T-cell (primary cell): ENCODE measurements at regions of chr3 and their contacts with region 1.

Region 1: GRCh38 chr3:128804017-128804810 is 75.2 kb upstream of the ACAD9 start:
- DNase-seq: peak; percentile 15 to 87 (median 60)
- ATAC-seq: peak; percentile 90 to 95 (median 94)
- H3K4me3 ChIP-seq: peak overlapping the region; percentile 32 to 34
- H3K4me3 Mint-ChIP-seq: peak overlapping the region; percentile 71 to 75 (median 72)
- H3K27ac ChIP-seq: peak overlapping the region; percentile 86
- H3K27ac Mint-ChIP-seq: peak overlapping the region; percentile 90 to 94
- H3K4me1 ChIP-seq: peaks cover 33 to 36% of the 10 kb centered on the region in 2 experiments
- H3K4me1 Mint-ChIP-seq: peaks cover 79 to 82% (median 80%) of the 10 kb centered on the region in 3 donors
- H3K27me3 ChIP-seq: no peaks in the 10 kb centered on the region
- H3K27me3 Mint-ChIP-seq: no peaks in the 10 kb centered on the region

Region 2: DNA sequence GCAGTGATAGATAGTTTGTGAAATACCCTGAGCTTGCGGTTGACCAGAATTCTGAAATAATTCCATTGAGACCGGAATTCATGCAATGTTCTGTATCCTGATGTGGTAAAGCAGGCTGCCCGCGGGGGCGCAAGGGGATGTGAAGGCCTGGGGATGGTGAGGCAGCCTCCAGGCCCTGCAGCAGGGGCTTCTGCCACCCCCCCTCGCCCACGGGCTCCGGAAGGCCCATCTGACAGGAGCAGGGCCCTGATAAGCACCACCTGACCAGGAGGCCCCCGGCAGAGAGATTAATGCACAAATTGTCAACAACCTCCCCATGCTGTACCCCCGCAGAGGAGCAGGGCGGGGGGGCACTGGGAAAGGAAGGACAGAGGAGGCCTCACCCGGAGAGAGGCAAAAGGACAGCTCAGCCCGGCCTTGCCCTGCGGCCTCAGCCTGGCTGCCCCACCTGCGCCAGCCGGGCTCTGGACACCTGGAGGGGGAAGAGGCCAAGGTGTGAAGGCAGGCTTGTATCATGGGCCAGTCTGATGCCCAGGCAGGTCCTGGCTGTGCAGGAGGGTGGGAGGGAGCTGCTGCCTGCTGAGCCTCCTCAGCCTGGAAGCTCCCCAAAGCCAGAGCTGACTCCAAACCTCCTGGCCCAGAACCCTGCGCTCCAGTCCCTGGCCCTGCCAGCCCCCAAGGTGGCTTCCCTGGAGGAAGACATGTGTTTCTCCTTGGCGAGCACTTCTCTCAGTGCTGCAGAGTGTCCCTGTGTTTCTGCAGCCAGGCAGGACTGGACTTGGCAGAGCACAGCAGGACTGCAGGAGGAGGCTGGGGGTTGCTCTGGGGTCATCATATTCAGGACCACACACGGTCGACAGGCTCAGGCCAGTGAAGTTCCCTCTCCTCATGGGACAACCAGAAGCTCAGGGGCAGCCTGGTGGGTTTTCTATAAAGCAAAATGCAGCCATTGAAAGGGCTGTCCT is 200.1 kb before region 1 on chr3:
- CTCF ChIA-PET with region 1: no interaction called
- POLR2A ChIA-PET with region 1: no interaction called
- DNase-seq: no peak
- ATAC-seq: no peak
- H3K4me3 ChIP-seq: no peak overlapping the region
- H3K4me3 Mint-ChIP-seq: no peak overlapping the region
- H3K27ac ChIP-seq: no peak overlapping the region
- H3K27ac Mint-ChIP-seq: no peak overlapping the region
- H3K4me1 ChIP-seq: peaks cover 0 to 12% of the 10 kb centered on the region in 2 experiments
- H3K4me1 Mint-ChIP-seq: peaks cover 0 to 2% (median 0%) of the 10 kb centered on the region in 3 donors
- H3K27me3 ChIP-seq: peaks cover 0 to 12% of the 10 kb centered on the region in 2 experiments
- H3K27me3 Mint-ChIP-seq: no peaks in the 10 kb centered on the region

Region 3: DNA sequence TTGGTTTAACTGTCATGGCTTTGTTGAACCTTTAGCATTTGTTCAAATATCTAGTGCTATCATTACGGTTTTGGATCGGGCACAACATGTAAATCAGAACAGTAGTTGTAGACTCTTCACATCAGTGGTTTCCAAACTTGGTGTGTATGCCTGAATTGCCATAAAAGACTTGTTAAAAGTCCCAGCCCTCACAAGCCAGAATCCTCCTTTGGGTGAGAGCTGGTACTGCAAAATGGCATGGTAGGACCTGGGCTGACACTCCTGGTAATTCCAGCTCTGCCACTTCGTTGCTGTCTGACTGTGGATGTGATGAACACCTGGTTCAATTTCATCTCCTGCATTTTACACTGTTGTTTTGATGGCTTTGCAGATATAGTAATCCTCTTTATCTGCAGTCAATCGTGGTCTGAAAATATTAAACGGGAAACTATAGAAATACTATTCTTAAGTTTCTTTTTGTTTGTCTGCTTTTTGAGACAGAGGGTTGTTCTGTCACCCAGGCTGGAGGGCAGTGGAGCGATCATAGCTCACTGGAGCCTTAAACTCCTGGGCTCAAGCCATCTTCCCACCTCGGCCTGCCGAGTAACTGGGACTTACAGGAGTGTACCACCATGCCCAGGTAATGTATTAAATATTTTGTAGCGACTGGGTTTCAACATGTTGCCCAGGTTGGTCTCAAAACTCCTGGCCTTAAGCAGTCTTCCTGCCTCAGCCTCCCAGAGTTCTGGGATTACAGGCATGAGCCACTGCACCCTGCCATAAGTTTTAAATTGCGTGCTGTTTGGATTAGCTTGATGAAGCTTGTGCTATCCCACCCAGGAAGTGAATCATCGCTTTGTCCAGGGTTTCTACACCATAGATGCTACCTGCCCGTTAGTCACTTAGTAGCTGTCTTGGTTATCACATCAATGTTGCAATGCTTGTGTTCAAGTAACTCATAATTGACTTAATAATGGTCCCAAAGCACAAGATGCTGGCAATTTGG is 16.7 kb before region 1 on chr3:
- CTCF ChIA-PET with region 1: interaction called in 1 of 2 experiments, 12 read pairs
- POLR2A ChIA-PET with region 1: interaction called in 1 of 2 experiments, 4 read pairs
- DNase-seq: peak in 20 of 35 experiments; percentile 17 to 68 (median 27)
- ATAC-seq: peak; percentile 29 to 81 (median 64)
- H3K4me3 ChIP-seq: no peak overlapping the region
- H3K4me3 Mint-ChIP-seq: peak overlapping the region; percentile 74 to 78 (median 77)
- H3K27ac ChIP-seq: peak overlapping the region; percentile 84
- H3K27ac Mint-ChIP-seq: peak overlapping the region; percentile 98 to 99
- H3K4me1 ChIP-seq: peaks cover 47 to 67% of the 10 kb centered on the region in 2 experiments
- H3K4me1 Mint-ChIP-seq: peaks cover 83 to 95% (median 89%) of the 10 kb centered on the region in 3 donors
- H3K27me3 ChIP-seq: no peaks in the 10 kb centered on the region
- H3K27me3 Mint-ChIP-seq: no peaks in the 10 kb centered on the region

Region 4: DNA sequence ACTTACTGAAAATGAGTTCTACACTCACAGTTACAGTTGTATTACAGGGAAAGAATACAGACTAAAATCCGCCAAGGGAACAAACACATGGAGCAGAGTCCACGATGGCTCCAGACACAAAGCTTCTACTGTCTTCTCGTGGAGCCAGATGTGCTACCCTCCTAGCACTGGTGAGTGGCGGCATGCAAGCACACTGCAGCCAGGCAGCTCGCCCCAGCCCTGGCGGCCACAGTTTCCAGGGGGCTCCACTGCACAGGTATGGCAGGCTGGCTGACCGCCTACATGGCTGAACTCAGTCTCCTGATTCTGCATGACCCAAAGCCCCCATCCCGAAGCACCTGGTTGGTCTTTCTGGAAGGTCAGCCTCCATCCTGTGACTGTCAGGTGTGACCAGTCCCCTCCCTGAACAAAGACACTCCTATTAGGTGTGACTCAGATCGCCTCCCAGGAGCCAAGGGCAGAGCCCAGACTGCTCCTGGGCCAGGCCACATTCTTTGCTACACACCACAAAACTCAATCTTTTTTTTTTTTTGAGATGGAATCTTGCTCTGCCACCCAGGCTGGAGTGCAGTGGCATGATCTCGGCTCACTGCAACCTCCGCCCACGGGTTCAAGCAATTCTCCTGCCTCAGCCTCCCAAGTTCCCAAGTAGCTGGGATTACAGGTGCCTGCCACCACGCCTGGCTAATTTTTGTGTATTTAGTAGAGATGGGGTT is 138.1 kb after region 1 on chr3:
- CTCF ChIA-PET with region 1: no interaction called
- POLR2A ChIA-PET with region 1: no interaction called
- DNase-seq: no peak
- ATAC-seq: no peak
- H3K4me3 ChIP-seq: no peak overlapping the region
- H3K4me3 Mint-ChIP-seq: no peak overlapping the region
- H3K27ac ChIP-seq: no peak overlapping the region
- H3K27ac Mint-ChIP-seq: no peak overlapping the region
- H3K4me1 ChIP-seq: no peaks in the 10 kb centered on the region
- H3K4me1 Mint-ChIP-seq: no peaks in the 10 kb centered on the region
- H3K27me3 ChIP-seq: peaks cover 0 to 25% of the 10 kb centered on the region in 2 experiments
- H3K27me3 Mint-ChIP-seq: peaks cover 5 to 13% of the 10 kb centered on the region in 2 donors

Region 5: DNA sequence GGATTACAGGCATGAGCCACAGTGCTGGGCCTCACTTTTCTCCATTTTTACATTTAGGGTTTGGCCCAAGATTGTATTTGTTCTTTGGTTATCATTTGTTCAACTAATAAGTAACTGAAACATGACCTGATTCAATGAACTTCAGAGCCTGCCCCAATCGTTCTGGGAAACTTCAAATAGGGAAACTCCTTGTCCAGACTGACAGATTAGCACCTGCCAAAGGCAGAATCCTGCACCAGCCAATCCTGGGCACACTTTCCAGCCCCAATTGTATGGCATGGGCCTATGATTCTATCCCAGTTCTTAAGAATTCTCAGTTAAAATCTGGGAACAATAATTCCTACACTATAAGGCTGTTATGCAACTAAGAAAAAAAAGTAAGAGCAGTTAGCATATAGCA is 335.7 kb after region 1 on chr3:
- CTCF ChIA-PET with region 1: no interaction called
- POLR2A ChIA-PET with region 1: no interaction called
- DNase-seq: no peak
- ATAC-seq: no peak
- H3K4me3 ChIP-seq: no peak overlapping the region
- H3K4me3 Mint-ChIP-seq: no peak overlapping the region
- H3K27ac ChIP-seq: no peak overlapping the region
- H3K27ac Mint-ChIP-seq: no peak overlapping the region
- H3K4me1 ChIP-seq: no peaks in the 10 kb centered on the region
- H3K4me1 Mint-ChIP-seq: no peaks in the 10 kb centered on the region
- H3K27me3 ChIP-seq: no peaks in the 10 kb centered on the region
- H3K27me3 Mint-ChIP-seq: no peaks in the 10 kb centered on the region